Transverse colon (tissue), 4 donors: ENCODE measurements at regions of chr19 and their contacts with region 1.

Region 1: DNA sequence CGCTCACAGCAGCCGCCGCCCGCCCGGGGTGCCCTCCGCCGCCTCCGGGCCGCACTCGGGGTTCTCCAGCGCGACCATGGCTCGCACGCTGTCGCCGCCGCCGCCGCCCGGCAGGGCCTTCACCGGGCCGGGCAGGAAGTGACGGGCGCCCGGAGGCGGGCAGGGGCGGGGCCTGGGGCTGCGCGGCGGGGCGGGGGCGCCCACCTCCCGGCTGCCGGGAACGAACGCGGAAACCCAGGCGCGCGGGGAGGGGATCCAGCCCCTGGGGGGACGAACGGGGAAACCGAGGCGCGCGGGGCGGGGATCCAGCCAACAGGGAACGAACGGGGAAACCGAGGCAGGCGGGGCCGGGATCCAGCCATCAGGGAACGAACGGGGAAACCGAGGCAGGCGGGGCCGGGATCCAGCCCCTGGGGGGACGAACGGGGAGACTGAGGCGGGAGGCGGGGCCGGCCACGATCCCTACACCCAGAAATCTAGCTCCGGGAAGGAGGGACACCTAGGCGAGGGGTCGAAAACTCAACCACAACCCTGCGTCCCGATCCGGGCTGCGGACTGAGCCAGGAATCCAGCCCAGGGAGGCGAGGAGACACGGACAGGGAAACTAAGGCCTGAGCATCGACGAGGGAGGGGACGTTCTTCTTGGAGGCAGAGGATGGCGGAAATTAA is at the start of gene R3HDM4:
- DNase-seq: peak; percentile 89
- H3K4me3 ChIP-seq: peak within 1 kb of the TSS; percentile 89 to 99 (median 94)
- H3K27ac ChIP-seq: peak within 1 kb of the TSS; percentile 90 to 100 (median 95)
- H3K4me1 ChIP-seq: peaks cover 22 to 56% (median 42%) of the 10 kb centered on the region in 4 donors
- H3K27me3 ChIP-seq: peaks cover 22% of the 10 kb centered on the region
- CTCF ChIP-seq: no peak
- EP300 ChIP-seq: no peak
- POLR2A ChIP-seq: peak; percentile 54
- total RNA-seq, gene R3HDM4: 43.8 to 49.4 (median 46.7) TPM

Region 2: DNA sequence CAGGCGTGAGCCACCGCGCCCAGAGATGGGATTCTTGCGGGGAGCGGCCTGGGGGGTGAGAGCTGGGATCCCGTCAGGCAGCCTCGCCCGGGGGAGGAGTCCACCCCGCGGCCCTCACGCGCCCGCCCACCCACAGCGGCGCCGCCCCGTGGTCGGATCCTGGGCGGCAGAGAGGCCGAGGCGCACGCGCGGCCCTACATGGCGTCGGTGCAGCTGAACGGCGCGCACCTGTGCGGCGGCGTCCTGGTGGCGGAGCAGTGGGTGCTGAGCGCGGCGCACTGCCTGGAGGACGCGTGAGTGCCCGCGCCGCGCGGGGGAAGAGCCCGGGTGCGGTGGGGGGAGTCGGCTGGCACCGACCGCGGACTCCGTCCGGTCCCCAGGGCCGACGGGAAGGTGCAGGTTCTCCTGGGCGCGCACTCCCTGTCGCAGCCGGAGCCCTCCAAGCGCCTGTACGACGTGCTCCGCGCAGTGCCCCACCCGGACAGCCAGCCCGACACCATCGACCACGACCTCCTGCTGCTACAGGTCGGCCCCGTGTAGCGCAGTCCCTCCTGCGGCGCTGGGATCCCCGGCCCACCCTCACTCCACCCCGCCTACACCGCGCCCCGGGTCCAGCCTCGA is 52.6 kb before region 1 on chr19:
- in situ Hi-C with region 1: no loop called
- intact Hi-C with region 1: loop called (anchors 5 kb)
- DNase-seq: peak; percentile 84
- H3K4me3 ChIP-seq: peak overlapping the region; percentile 9 to 45 (median 35)
- H3K27ac ChIP-seq: peak overlapping the region; percentile 62 to 75 (median 70)
- H3K4me1 ChIP-seq: peaks cover 6 to 46% (median 41%) of the 10 kb centered on the region in 4 donors
- H3K27me3 ChIP-seq: peaks cover 37% of the 10 kb centered on the region
- CTCF ChIP-seq: peak in 2 of 5 experiments; percentile 17 to 31
- EP300 ChIP-seq: no peak
- POLR2A ChIP-seq: peak; percentile 12

Region 3: DNA sequence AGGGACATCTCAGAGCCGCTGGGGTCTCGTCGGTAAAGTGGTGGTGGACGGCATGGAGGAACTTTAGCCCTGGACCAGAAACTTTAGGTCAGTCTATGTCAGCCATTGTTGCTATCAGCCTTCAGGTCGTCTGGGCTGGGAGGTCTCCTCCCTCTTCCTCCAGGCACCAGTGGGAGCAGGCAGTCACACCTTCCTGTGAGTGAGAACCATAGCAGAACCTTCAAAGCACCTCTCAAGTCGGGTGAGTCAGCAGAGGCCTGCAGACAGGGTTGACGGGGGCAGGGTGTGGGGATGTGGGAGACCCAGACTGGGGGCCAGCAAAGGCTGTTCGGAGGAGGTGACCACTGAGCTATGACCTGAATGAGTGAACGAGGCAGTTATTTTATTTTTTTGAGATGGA is 276.2 kb after region 1 on chr19:
- in situ Hi-C with region 1: no loop called
- intact Hi-C with region 1: loop called (anchors 10 kb)
- DNase-seq: no peak
- H3K4me3 ChIP-seq: no peak overlapping the region
- H3K27ac ChIP-seq: no peak overlapping the region
- H3K4me1 ChIP-seq: no peaks in the 10 kb centered on the region
- H3K27me3 ChIP-seq: no peaks in the 10 kb centered on the region
- CTCF ChIP-seq: no peak
- EP300 ChIP-seq: no peak
- POLR2A ChIP-seq: no peak